ENCODE measurements at regions of chr11 and their contacts with region 1.

Region 1: GRCh38 chr11:11569936-11570491 is 51.8 kb downstream of the GALNT18 start:
- DNase-seq: no peak
- H3K4me3 ChIP-seq: no peak overlapping the region
- H3K27ac ChIP-seq: peak overlapping the region; percentile 14 to 72 (median 58)
- H3K4me1 ChIP-seq: peaks cover 23 to 86% (median 66%) of the 10 kb centered on the region in 4 donors
- H3K27me3 ChIP-seq: no peaks in the 10 kb centered on the region
- CTCF ChIP-seq: no peak
- EP300 ChIP-seq: no peak
- POLR2A ChIP-seq: no peak

Region 2: DNA sequence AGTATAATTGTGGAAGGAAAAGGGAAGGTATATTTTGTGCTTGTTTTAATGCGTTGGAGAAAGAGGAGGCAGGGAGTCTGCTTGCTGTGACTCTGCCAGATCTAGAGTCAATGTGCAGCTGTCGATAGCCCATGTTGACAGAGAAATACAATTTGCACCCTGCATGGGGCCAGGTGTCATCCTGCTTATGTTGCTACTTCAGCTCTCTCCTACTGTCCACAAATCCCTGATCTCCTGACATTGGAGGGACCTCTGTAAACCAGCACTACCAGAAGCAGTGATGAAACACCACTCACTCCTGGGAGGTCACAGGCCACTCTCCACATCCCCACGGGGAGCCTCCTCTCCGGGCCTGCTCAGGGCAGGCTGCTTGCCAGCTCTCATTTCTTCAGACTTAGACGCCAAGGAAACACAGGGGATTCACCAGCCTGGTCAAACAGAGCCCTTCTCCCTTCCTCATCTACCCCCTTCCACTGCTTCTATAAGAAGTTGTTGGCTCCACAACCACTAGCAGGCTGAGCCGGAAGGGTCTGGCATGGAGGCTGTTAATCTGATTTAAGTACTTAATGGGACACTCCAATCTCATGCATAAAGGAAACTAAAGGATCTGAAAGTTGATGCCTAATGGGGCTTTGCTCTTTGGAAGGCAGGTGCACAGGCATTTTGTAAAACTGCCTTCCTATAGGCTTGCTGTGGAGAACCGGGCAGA is 187.0 kb before region 1 on chr11:
- intact Hi-C with region 1: no loop called
- DNase-seq: no peak
- H3K4me3 ChIP-seq: no peak overlapping the region
- H3K27ac ChIP-seq: no peak overlapping the region
- H3K4me1 ChIP-seq: peaks cover 0 to 8% (median 0%) of the 10 kb centered on the region in 4 donors
- H3K27me3 ChIP-seq: no peaks in the 10 kb centered on the region
- CTCF ChIP-seq: no peak
- EP300 ChIP-seq: no peak
- POLR2A ChIP-seq: no peak

Region 3: DNA sequence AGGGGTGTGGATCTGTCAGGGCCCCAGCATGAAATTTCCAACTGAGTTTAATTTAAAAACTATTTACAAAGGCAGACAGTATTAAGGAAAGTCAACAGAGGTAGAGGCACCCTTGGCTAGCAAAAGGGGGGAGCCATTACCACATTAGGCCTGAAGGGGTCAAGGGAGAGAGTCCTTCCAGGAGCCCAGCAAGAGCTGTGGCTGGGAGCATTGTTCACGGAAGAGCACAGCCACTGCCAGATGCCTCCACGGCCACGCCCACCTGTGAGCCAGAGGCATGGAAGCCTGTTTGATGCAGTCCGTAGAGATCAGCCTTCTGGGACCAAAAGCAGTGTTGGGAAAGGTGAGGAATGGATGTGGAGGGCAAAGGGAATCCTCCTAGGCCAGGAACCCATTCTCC is 50.8 kb before region 1 on chr11:
- intact Hi-C with region 1: no loop called
- DNase-seq: no peak
- H3K4me3 ChIP-seq: no peak overlapping the region
- H3K27ac ChIP-seq: no peak overlapping the region
- H3K4me1 ChIP-seq: peaks cover 18 to 55% (median 38%) of the 10 kb centered on the region in 4 donors
- H3K27me3 ChIP-seq: no peaks in the 10 kb centered on the region
- CTCF ChIP-seq: no peak
- EP300 ChIP-seq: no peak
- POLR2A ChIP-seq: no peak

Region 4: DNA sequence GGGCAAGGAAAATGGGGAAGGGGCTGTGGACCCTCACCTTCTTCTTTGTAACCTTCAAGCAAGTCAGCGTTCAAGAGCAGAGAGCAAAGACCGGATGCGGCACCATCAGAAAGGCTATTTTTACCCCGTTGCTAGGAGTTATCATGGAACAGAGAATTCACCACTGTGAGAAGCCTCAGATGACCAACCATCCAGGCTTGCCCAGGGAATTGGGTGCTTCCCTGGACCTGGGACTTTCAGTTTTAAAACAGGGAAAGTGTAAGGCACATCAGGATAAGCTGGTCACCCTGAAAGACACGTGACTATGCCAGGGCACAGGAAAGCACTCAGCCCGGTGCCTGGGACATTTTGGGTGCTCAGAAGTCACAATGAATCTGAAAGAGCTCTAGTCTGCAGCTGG is 41.4 kb after region 1 on chr11:
- intact Hi-C with region 1: loop called (anchors 5 kb)
- DNase-seq: peak; percentile 90
- H3K4me3 ChIP-seq: no peak overlapping the region
- H3K27ac ChIP-seq: peak overlapping the region; percentile 11 to 34 (median 28)
- H3K4me1 ChIP-seq: peaks cover 37 to 77% (median 62%) of the 10 kb centered on the region in 4 donors
- H3K27me3 ChIP-seq: no peaks in the 10 kb centered on the region
- CTCF ChIP-seq: no peak
- EP300 ChIP-seq: no peak
- POLR2A ChIP-seq: no peak

Region 5: DNA sequence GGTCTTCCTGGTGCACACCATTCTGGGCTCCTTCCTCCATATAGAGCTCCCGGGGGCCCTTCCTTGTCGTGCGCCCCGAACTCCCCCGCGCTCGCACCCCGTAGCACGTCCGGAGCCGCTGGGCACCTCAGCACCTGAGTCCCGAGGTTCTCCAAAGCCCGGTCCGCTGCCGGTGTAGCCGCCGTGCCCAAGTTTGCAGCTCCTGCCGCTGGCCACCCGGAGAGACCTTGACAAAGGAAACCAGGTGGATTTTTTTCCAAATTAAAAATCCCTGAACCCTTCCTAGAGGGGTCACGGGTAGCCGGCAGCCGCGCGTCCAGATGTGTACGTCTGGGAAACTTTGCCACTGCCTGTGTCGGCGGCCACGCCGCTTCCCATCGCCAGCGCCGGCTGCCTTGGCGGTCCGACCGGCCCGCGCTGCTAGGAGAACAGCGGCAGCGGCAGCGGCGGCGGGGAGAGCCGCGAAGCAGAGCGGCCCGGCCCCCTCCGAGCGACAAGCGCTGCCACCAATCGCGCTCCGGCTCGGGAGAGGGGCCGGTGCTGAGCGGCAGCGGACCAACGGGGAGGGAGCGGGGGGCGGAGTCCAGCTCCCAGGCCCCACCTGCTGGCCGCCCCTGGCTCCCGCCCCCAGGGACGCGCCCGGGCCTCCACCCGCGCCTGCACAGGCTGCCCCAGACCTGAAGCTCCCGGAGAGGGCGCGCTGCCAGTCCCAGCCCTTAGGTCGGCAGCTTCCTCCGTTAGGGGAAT is 51.7 kb after region 1 on chr11 and contains the start of gene GALNT18:
- intact Hi-C with region 1: no loop called
- DNase-seq: peak; percentile 93
- H3K4me3 ChIP-seq: peak within 1 kb of the TSS; percentile 64 to 71 (median 68)
- H3K27ac ChIP-seq: peak within 1 kb of the TSS; percentile 75 to 89 (median 82)
- H3K4me1 ChIP-seq: peaks cover 29 to 67% (median 66%) of the 10 kb centered on the region in 4 donors
- H3K27me3 ChIP-seq: no peaks in the 10 kb centered on the region
- CTCF ChIP-seq: peak; percentile 35 to 56 (median 44)
- EP300 ChIP-seq: no peak
- POLR2A ChIP-seq: no peak
- total RNA-seq, gene GALNT18: 29.1 to 67.0 (median 49.3) TPM

Measured in esophagus muscularis mucosa (tissue), 4 donors.